ENCODE measurements at regions of chr2 and their contacts with region 1.

Region 1: GRCh38 chr2:177212106-177212890 is at the start of gene HNRNPA3:
- DNase-seq: peak; percentile 100
- ATAC-seq: peak; percentile 86
- H3K4me3 Mint-ChIP-seq: peak within 1 kb of the TSS; percentile 95
- H3K27ac Mint-ChIP-seq: peak within 1 kb of the TSS; percentile 100
- H3K4me1 Mint-ChIP-seq: peaks cover 48% of the 10 kb centered on the region
- H3K27me3 Mint-ChIP-seq: no peaks in the 10 kb centered on the region
- CTCF ChIP-seq: no peak
- total RNA-seq, gene HNRNPA3: 254 and 275 TPM in 2 replicates

Region 2: DNA sequence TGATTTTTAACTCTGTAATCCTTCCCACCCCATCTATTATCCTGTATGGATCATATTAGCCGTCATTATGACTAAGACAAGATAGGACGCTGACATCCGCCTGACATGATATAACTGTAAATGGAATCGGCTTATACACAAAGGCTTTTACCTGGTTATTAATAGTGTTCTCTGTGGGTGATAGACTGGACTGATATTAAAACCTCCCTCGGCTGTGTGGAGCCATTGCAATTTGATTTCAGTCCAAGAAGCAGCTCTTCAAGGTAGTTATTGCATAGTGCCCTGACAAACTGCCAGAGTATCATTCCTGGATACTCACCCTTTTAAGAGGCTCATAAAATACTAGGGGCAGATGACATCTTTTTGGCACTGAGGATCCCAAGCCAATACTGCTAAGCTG is 225.8 kb before region 1 on chr2:
- CTCF ChIA-PET with region 1: no interaction called
- POLR2A ChIA-PET with region 1: no interaction called
- intact Hi-C with region 1: no loop called
- DNase-seq: no peak
- ATAC-seq: no peak
- H3K4me3 Mint-ChIP-seq: no peak overlapping the region
- H3K27ac Mint-ChIP-seq: no peak overlapping the region
- H3K4me1 Mint-ChIP-seq: no peaks in the 10 kb centered on the region
- H3K27me3 Mint-ChIP-seq: peaks cover 11% of the 10 kb centered on the region
- CTCF ChIP-seq: no peak

Region 3: GRCh38 chr2:177195194-177195593 is 17.1 kb before region 1 on chr2:
- CTCF ChIA-PET with region 1: interaction called, 3 read pairs
- POLR2A ChIA-PET with region 1: interaction called, 17 read pairs
- intact Hi-C with region 1: no loop called
- DNase-seq: no peak
- ATAC-seq: no peak
- H3K4me3 Mint-ChIP-seq: no peak overlapping the region
- H3K27ac Mint-ChIP-seq: no peak overlapping the region
- H3K4me1 Mint-ChIP-seq: no peaks in the 10 kb centered on the region
- H3K27me3 Mint-ChIP-seq: no peaks in the 10 kb centered on the region
- CTCF ChIP-seq: no peak

Region 4: GRCh38 chr2:177239932-177240630 is 27.8 kb after region 1 on chr2:
- CTCF ChIA-PET with region 1: no interaction called
- POLR2A ChIA-PET with region 1: interaction called, 17 read pairs
- intact Hi-C with region 1: no loop called
- DNase-seq: no peak
- ATAC-seq: peak; percentile 84
- H3K4me3 Mint-ChIP-seq: peak overlapping the region; percentile 49
- H3K27ac Mint-ChIP-seq: peak overlapping the region; percentile 70
- H3K4me1 Mint-ChIP-seq: peaks cover 74% of the 10 kb centered on the region
- H3K27me3 Mint-ChIP-seq: no peaks in the 10 kb centered on the region
- CTCF ChIP-seq: no peak

Region 5: GRCh38 chr2:177392373-177393202 is 180.3 kb after region 1 on chr2 and contains the start of gene AGPS:
- CTCF ChIA-PET with region 1: interaction called, 3 read pairs
- POLR2A ChIA-PET with region 1: interaction called, 7 read pairs
- intact Hi-C with region 1: loop called (anchors 1 kb)
- DNase-seq: peak; percentile 66
- ATAC-seq: peak; percentile 93
- H3K4me3 Mint-ChIP-seq: peak within 1 kb of the TSS; percentile 92
- H3K27ac Mint-ChIP-seq: peak within 1 kb of the TSS; percentile 69
- H3K4me1 Mint-ChIP-seq: peaks cover 42% of the 10 kb centered on the region
- H3K27me3 Mint-ChIP-seq: no peaks in the 10 kb centered on the region
- CTCF ChIP-seq: no peak
- total RNA-seq, gene AGPS: 29.0 and 29.9 TPM in 2 replicates

Region 6: GRCh38 chr2:177618255-177619253 is 406.3 kb after region 1 on chr2:
- CTCF ChIA-PET with region 1: no interaction called
- POLR2A ChIA-PET with region 1: no interaction called
- intact Hi-C with region 1: loop called (anchors 1 kb)
- DNase-seq: peak; percentile 87
- ATAC-seq: peak; percentile 89
- H3K4me3 Mint-ChIP-seq: peak overlapping the region; percentile 97
- H3K27ac Mint-ChIP-seq: peak overlapping the region; percentile 100
- H3K4me1 Mint-ChIP-seq: peaks cover 7% of the 10 kb centered on the region
- H3K27me3 Mint-ChIP-seq: peaks cover 3% of the 10 kb centered on the region
- CTCF ChIP-seq: no peak